ENCODE measurements at regions of chr1 and their contacts with region 1.

Region 1: GRCh38 chr1:183148599-183148998 is 37.5 kb upstream of the LAMC2 start:
- DNase-seq: peak; percentile 76
- H3K4me3 ChIP-seq: no peak overlapping the region
- H3K27ac ChIP-seq: peak overlapping the region; percentile 53
- H3K4me1 ChIP-seq: peaks cover 22% of the 10 kb centered on the region
- H3K27me3 ChIP-seq: no peaks in the 10 kb centered on the region
- CTCF ChIP-seq: no peak

Region 2: DNA sequence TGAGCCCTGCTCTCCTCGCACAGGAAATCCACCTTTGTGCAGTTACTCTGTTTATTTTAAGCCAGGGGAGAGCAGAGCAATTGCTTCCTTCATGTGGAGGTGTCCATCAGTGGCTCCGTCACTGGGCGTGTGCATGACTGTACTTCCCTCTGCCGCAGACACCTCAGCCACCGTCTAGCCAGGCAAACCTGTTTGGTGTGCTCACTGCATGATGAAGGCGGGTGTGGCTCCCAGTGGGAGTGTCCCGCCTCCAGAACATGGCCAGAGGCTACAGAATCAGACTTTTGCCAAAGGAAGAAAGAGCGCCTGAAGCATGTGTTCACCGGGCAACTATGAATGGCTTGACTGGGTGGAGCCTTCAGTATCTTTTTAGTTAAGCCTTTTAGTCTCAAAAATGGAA is 11.4 kb after region 1 on chr1:
- CTCF ChIA-PET with region 1: no interaction called
- dilution Hi-C with region 1: no loop called
- in situ Hi-C with region 1: no loop called
- intact Hi-C with region 1: loop called (anchors 2 kb)
- DNase-seq: peak; percentile 100
- H3K4me3 ChIP-seq: no peak overlapping the region
- H3K27ac ChIP-seq: peak overlapping the region; percentile 90
- H3K4me1 ChIP-seq: peaks cover 47% of the 10 kb centered on the region
- H3K27me3 ChIP-seq: no peaks in the 10 kb centered on the region
- CTCF ChIP-seq: no peak

Region 3: DNA sequence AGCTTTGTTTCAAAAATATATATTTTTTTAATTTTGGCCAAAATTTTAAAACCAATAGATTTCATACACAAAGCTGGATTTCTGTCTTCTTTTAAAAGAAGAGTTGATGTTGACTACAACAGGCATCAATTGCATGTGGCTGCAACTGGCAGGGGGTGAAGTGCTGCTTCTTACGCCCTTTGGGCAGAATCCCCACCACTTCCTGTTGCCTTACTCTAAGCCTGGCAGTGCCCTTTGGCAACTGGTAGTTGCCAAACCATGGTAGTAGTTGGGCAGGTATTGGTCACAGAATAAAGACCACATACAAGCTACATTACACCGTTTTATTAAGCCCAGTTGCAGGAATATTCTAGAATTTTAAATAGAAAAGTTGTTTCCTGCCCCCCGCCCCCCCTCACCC is 54.5 kb after region 1 on chr1:
- CTCF ChIA-PET with region 1: no interaction called
- dilution Hi-C with region 1: no loop called
- in situ Hi-C with region 1: loop called in 1 of 2 experiments (anchors 5 kb)
- intact Hi-C with region 1: no loop called
- DNase-seq: no peak
- H3K4me3 ChIP-seq: no peak overlapping the region
- H3K27ac ChIP-seq: no peak overlapping the region
- H3K4me1 ChIP-seq: peaks cover 31% of the 10 kb centered on the region
- H3K27me3 ChIP-seq: no peaks in the 10 kb centered on the region
- CTCF ChIP-seq: no peak